CD8-positive, alpha-beta T cell (primary cell): ENCODE measurements at regions of chr16 and their contacts with region 1.

Region 1: GRCh38 chr16:66344533-66345145 is 21.9 kb upstream of the CDH5 start:
- DNase-seq: peak in 5 of 9 experiments; percentile 7 to 53 (median 39)
- ATAC-seq: no peak
- H3K4me3 ChIP-seq: no peak overlapping the region
- H3K4me3 Mint-ChIP-seq: no peak overlapping the region
- H3K27ac ChIP-seq: no peak overlapping the region
- H3K27ac Mint-ChIP-seq: no peak overlapping the region
- H3K4me1 ChIP-seq: no peaks in the 10 kb centered on the region
- H3K4me1 Mint-ChIP-seq: no peaks in the 10 kb centered on the region
- H3K27me3 ChIP-seq: no peaks in the 10 kb centered on the region
- H3K27me3 Mint-ChIP-seq: peaks cover 40% of the 10 kb centered on the region
- CTCF ChIP-seq: peak; percentile 95

Region 2: DNA sequence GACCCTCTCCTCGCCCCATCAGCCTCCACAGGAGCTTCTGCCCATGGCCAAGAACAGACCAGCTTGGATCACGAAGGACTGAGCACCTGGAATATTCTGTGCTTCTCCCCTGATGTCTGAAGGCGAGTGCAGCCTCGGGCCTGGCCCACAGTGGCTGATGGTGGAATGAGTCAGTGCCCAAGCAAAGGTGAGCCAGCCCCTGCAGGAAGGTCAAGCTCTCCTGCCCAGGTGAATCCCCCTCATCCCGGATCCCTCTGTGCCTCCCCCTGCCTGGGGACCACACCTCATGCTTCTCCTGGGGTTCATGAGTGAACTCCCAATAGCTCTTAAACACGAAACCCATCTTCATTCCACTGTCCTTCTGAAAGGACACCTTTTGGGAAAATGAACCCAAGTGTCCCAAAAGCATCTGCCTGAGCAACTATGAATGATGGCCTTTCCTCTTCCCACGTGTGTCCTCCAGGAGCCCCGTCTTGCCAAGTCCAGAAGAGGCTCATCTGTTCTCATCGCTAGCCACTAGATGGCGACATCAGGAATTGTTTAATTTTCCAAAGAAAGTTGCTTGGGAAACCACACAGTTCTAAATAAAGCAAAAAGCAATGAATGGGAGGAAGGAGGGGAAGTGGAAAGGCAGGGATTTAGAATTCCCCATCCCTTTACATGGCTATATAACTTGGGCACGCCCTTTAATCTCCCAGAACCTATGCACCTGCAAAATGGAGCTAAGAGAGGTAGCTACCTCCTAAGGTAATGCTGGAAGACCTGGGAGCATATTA is 12.7 kb after region 1 on chr16:
- CTCF ChIA-PET with region 1: interaction called, 21 read pairs
- POLR2A ChIA-PET with region 1: no interaction called
- intact Hi-C with region 1: no loop called
- DNase-seq: peak in 3 of 9 experiments; percentile 11 to 51 (median 40)
- ATAC-seq: no peak
- H3K4me3 ChIP-seq: no peak overlapping the region
- H3K4me3 Mint-ChIP-seq: no peak overlapping the region
- H3K27ac ChIP-seq: no peak overlapping the region
- H3K27ac Mint-ChIP-seq: no peak overlapping the region
- H3K4me1 ChIP-seq: no peaks in the 10 kb centered on the region
- H3K4me1 Mint-ChIP-seq: peaks cover 3% of the 10 kb centered on the region
- H3K27me3 ChIP-seq: peaks cover 0 to 3% of the 10 kb centered on the region in 2 experiments
- H3K27me3 Mint-ChIP-seq: peaks cover 50% of the 10 kb centered on the region
- CTCF ChIP-seq: peak; percentile 50

Region 3: GRCh38 chr16:66364117-66364967 is 19.7 kb after region 1 on chr16:
- CTCF ChIA-PET with region 1: interaction called, 18 read pairs
- POLR2A ChIA-PET with region 1: no interaction called
- intact Hi-C with region 1: no loop called
- DNase-seq: no peak
- ATAC-seq: no peak
- H3K4me3 ChIP-seq: no peak overlapping the region
- H3K4me3 Mint-ChIP-seq: no peak overlapping the region
- H3K27ac ChIP-seq: no peak overlapping the region
- H3K27ac Mint-ChIP-seq: no peak overlapping the region
- H3K4me1 ChIP-seq: no peaks in the 10 kb centered on the region
- H3K4me1 Mint-ChIP-seq: peaks cover 3% of the 10 kb centered on the region
- H3K27me3 ChIP-seq: peaks cover 0 to 2% of the 10 kb centered on the region in 2 experiments
- H3K27me3 Mint-ChIP-seq: peaks cover 56% of the 10 kb centered on the region
- CTCF ChIP-seq: no peak